A549 (cell line): ENCODE measurements at regions of chr11 and their contacts with region 1.

Region 1: DNA sequence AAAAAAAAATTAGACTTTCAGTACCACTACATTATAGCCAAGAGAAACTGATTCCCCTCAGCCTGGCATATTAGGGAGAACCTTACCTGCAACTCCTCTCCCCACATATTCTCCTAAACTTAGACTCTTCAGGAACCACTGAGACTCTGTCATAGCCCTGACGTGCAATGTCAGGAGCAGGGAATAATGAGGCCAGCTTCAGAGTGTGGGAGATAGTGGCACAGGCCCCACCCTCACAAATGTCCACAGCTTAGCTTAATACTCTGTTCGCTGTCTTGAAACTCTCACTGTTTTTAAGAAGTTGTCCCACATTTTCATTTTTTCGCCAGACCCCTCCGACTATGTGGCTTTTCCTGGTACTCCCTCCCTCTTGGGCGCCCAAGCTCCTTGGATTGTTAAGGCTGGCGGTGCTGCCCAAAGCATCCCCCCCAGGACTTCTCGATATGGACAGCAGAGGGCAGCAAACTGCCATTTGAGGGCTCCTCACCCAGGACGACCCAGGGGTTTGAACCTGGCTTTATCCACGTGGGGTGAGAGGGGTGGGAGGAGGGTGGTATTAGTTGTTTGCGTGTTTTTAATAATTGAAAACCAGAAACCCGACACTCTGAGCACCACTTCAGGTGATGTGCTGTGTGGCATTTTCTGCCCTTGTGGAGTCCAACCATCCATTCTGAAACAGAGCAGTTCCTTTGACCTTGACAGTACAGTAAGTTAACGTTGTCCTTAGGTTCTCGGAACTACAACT is 45.2 kb upstream of the RASSF10 start:
- DNase-seq: peak; percentile 70 to 91
- ATAC-seq: peak; percentile 88 to 98
- H3K4me3 ChIP-seq: no peak overlapping the region
- H3K27ac ChIP-seq: peak overlapping the region; percentile 43 to 70; a peak in 4 of 6 replicates
- H3K4me1 ChIP-seq: peaks cover 14% of the 10 kb centered on the region
- CTCF ChIP-seq: peak; percentile 91
- EP300 ChIP-seq: no peak
- POLR2A ChIP-seq: no peak
- RAD21 ChIP-seq: peak; percentile 98 to 99

Region 2: DNA sequence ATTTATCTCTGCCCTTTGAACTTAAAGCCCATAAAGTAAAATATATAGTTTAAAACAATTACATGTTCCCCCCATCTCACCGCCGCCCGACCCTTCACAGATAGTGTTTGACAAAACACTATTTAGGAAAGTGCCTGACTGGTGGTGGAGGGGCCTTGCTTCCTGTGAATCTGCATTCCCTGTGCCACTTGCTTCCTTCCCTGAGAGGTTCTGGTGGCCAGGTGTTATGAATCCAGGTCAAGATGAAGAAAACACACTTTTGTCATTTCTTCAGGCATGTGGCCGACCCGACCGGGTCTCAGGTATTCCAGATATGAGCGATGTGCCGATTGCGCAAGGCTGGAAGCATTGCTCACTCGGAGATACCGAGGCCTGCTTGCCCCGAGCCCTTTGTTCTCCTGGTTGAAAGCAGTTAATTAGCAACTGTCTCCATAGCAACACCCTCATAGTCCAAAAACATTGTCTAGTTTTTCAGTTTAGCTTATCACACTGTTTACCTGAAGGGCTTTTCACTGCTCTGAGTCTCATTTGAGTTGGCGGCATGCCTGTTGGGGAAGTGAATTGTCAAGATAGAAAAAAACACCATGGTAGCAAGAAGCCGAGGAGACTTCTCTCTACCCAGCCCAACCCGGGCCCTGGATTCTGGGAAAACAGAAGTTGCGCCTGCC is 161.4 kb before region 1 on chr11:
- CTCF ChIA-PET with region 1: no interaction called
- POLR2A ChIA-PET with region 1: no interaction called
- DNase-seq: peak; percentile 94 to 97
- ATAC-seq: peak; percentile 80 to 81
- H3K4me3 ChIP-seq: peak overlapping the region; percentile 5; the same call in 1 of the 3 replicates
- H3K27ac ChIP-seq: peak overlapping the region; percentile 80 to 89
- H3K4me1 ChIP-seq: peaks cover 97% of the 10 kb centered on the region
- CTCF ChIP-seq: no peak
- EP300 ChIP-seq: peak; percentile 69 to 90; a peak in 3 of 5 replicates
- POLR2A ChIP-seq: no peak
- RAD21 ChIP-seq: peak; percentile 20 to 49; a peak in 4 of 5 replicates

Region 3: DNA sequence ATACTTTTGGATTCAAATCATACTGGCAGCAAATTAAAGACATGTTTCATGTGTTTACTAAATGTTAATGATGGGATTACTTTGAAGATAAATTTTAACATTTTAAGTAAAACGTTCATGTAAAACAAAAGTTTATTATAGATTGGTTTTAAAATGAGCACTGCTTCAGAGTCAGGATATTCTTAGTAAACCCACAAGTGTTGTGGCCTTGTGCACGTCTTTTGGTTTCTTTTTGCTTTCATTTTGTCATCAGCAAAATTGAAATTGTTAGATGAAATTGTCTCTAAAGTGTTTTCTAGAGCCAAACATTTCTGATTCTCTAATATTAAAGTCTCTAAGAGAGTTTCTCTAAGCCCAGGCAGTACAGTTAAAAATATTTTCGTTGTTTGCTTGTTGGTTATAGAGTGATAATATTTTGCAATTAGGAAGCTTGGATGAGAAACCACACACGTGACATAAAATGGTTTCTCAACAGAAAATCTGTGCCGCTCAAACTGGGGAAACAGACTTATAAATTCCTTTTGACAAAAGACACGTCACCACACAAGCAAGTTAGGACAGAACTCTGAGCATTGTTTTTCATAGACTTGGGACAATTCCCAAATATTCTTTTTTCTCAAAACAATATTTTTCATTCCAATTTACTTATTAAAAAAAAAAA is 125.4 kb before region 1 on chr11:
- CTCF ChIA-PET with region 1: no interaction called
- POLR2A ChIA-PET with region 1: no interaction called
- DNase-seq: no peak
- ATAC-seq: no peak
- H3K4me3 ChIP-seq: no peak overlapping the region
- H3K27ac ChIP-seq: no peak overlapping the region
- H3K4me1 ChIP-seq: peaks cover 64% of the 10 kb centered on the region
- CTCF ChIP-seq: no peak
- EP300 ChIP-seq: no peak
- POLR2A ChIP-seq: no peak
- RAD21 ChIP-seq: no peak

Region 4: GRCh38 chr11:12900496-12900895 is 63.5 kb before region 1 on chr11:
- CTCF ChIA-PET with region 1: no interaction called
- POLR2A ChIA-PET with region 1: no interaction called
- DNase-seq: peak in 1 of 2 experiments; percentile 37
- ATAC-seq: peak; percentile 48 to 70; a peak in 4 of 6 replicates
- H3K4me3 ChIP-seq: no peak overlapping the region
- H3K27ac ChIP-seq: no peak overlapping the region
- H3K4me1 ChIP-seq: peaks cover 20% of the 10 kb centered on the region; the same call in 2 of the 3 replicates
- CTCF ChIP-seq: no peak
- EP300 ChIP-seq: no peak
- POLR2A ChIP-seq: no peak
- RAD21 ChIP-seq: no peak

Region 5: GRCh38 chr11:12952094-12952493 is 11.9 kb before region 1 on chr11:
- CTCF ChIA-PET with region 1: interaction called, 17 read pairs
- POLR2A ChIA-PET with region 1: no interaction called
- DNase-seq: no peak
- ATAC-seq: no peak
- H3K4me3 ChIP-seq: no peak overlapping the region
- H3K27ac ChIP-seq: no peak overlapping the region
- H3K4me1 ChIP-seq: peaks cover 9% of the 10 kb centered on the region; the same call in 2 of the 3 replicates
- CTCF ChIP-seq: no peak
- EP300 ChIP-seq: no peak
- POLR2A ChIP-seq: no peak
- RAD21 ChIP-seq: no peak

Region 6: GRCh38 chr11:13008625-13009475 is 44.9 kb after region 1 on chr11 and contains the start of gene RASSF10:
- CTCF ChIA-PET with region 1: interaction called, 25 read pairs
- POLR2A ChIA-PET with region 1: interaction called, 5 read pairs
- DNase-seq: peak; percentile 89 to 96
- ATAC-seq: peak; percentile 95 to 98
- H3K4me3 ChIP-seq: peak within 1 kb of the TSS; percentile 66
- H3K27ac ChIP-seq: peak within 1 kb of the TSS; percentile 65 to 90
- H3K4me1 ChIP-seq: peaks cover 48% of the 10 kb centered on the region
- CTCF ChIP-seq: no peak
- EP300 ChIP-seq: no peak
- POLR2A ChIP-seq: peak; percentile 97
- RAD21 ChIP-seq: 0 out of 5 replicates have a peak, but pooled peaks of 1 of the 2 experiments have one; percentile 8
- polyA plus RNA-seq, gene RASSF10: 2.4 and 3.9 TPM in 2 replicates

Region 7: GRCh38 chr11:13152736-13153533 is 189.0 kb after region 1 on chr11:
- CTCF ChIA-PET with region 1: interaction called, 141 read pairs
- POLR2A ChIA-PET with region 1: no interaction called
- DNase-seq: peak; percentile 34 to 44
- ATAC-seq: peak in 1 of 2 experiments; percentile 44; a peak in 2 of 6 replicates
- H3K4me3 ChIP-seq: no peak overlapping the region
- H3K27ac ChIP-seq: peak overlapping the region in 1 of 2 experiments; percentile 73; a peak in 4 of 6 replicates
- H3K4me1 ChIP-seq: peaks cover 17% of the 10 kb centered on the region; the same call in 2 of the 3 replicates
- CTCF ChIP-seq: peak; percentile 84
- EP300 ChIP-seq: no peak
- POLR2A ChIP-seq: no peak
- RAD21 ChIP-seq: peak; percentile 91 to 92

Region 8: DNA sequence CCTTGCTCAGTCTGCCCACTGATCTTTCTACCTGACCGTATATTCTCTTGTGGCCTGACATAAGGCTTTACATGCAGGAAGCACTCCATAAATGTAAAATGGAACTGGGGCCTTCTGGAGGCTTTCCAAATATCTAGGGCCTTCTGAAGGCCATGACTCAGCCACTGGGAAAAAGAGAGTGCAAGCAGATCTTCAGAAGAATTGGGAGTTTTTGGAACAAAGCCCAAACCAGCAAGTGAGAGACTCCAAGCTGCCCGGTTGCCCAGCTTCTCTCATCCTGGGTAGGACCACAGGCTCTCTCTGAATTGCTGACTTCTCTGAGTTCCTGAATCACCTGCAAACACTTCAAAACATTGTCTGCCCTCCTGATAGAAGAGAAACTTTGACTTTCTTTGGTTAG is 205.7 kb after region 1 on chr11:
- CTCF ChIA-PET with region 1: interaction called, 16 read pairs
- POLR2A ChIA-PET with region 1: no interaction called
- DNase-seq: peak in 1 of 2 experiments; percentile 58
- ATAC-seq: peak; percentile 48 to 72; a peak in 5 of 6 replicates
- H3K4me3 ChIP-seq: no peak overlapping the region
- H3K27ac ChIP-seq: peak overlapping the region in 1 of 2 experiments; percentile 44; a peak in 4 of 6 replicates
- H3K4me1 ChIP-seq: peaks cover 26% of the 10 kb centered on the region
- CTCF ChIP-seq: no peak
- EP300 ChIP-seq: no peak
- POLR2A ChIP-seq: no peak
- RAD21 ChIP-seq: no peak

Region 9: GRCh38 chr11:13189561-13190426 is 225.8 kb after region 1 on chr11:
- CTCF ChIA-PET with region 1: interaction called, 83 read pairs
- POLR2A ChIA-PET with region 1: no interaction called
- DNase-seq: no peak
- ATAC-seq: no peak
- H3K4me3 ChIP-seq: no peak overlapping the region
- H3K27ac ChIP-seq: no peak overlapping the region
- H3K4me1 ChIP-seq: no peaks in the 10 kb centered on the region
- CTCF ChIP-seq: no peak
- EP300 ChIP-seq: no peak
- POLR2A ChIP-seq: no peak
- RAD21 ChIP-seq: no peak